ENCODE measurements at regions of chr1 and their contacts with region 1.

Region 1: GRCh38 chr1:20151906-20152598 is 12.9 kb downstream of the PLA2G2F start:
- DNase-seq: peak; percentile 67 to 73 (median 70)
- H3K4me3 ChIP-seq: peak overlapping the region; percentile 49 to 56
- H3K4me3 Mint-ChIP-seq: peak overlapping the region; percentile 69 to 92 (median 84)
- H3K27ac ChIP-seq: no peak overlapping the region
- H3K27ac Mint-ChIP-seq: peak overlapping the region in 1 of 7 donors; percentile 24
- H3K4me1 ChIP-seq: peaks cover 17% of the 10 kb centered on the region
- H3K4me1 Mint-ChIP-seq: peaks cover 11 to 18% (median 14%) of the 10 kb centered on the region in 4 donors
- H3K27me3 ChIP-seq: no peaks in the 10 kb centered on the region
- H3K27me3 Mint-ChIP-seq: no peaks in the 10 kb centered on the region

Region 2: GRCh38 chr1:19918057-19918456 is 234.0 kb before region 1 on chr1:
- CTCF ChIA-PET with region 1: interaction called, 102 read pairs
- POLR2A ChIA-PET with region 1: no interaction called
- intact Hi-C with region 1: loop called (anchors 1 kb)
- DNase-seq: peak; percentile 65 to 75 (median 71)
- H3K4me3 ChIP-seq: no peak overlapping the region
- H3K4me3 Mint-ChIP-seq: peak overlapping the region in 1 of 8 donors; percentile 68
- H3K27ac ChIP-seq: no peak overlapping the region
- H3K27ac Mint-ChIP-seq: peak overlapping the region in 1 of 7 donors; percentile 44
- H3K4me1 ChIP-seq: no peaks in the 10 kb centered on the region
- H3K4me1 Mint-ChIP-seq: peaks cover 4 to 6% (median 5%) of the 10 kb centered on the region in 4 donors
- H3K27me3 ChIP-seq: no peaks in the 10 kb centered on the region
- H3K27me3 Mint-ChIP-seq: peaks cover 0 to 1% of the 10 kb centered on the region in 2 donors

Region 3: GRCh38 chr1:20165522-20165951 is 13.5 kb after region 1 on chr1:
- CTCF ChIA-PET with region 1: interaction called, 22 read pairs
- POLR2A ChIA-PET with region 1: no interaction called
- intact Hi-C with region 1: no loop called
- DNase-seq: no peak
- H3K4me3 ChIP-seq: no peak overlapping the region
- H3K4me3 Mint-ChIP-seq: no peak overlapping the region
- H3K27ac ChIP-seq: no peak overlapping the region
- H3K27ac Mint-ChIP-seq: no peak overlapping the region
- H3K4me1 ChIP-seq: no peaks in the 10 kb centered on the region
- H3K4me1 Mint-ChIP-seq: peaks cover 0 to 1% (median 0%) of the 10 kb centered on the region in 4 donors
- H3K27me3 ChIP-seq: no peaks in the 10 kb centered on the region
- H3K27me3 Mint-ChIP-seq: peaks cover 3 to 5% of the 10 kb centered on the region in 2 donors

Region 4: GRCh38 chr1:20178634-20179370 is 26.8 kb after region 1 on chr1:
- CTCF ChIA-PET with region 1: interaction called, 15 read pairs
- POLR2A ChIA-PET with region 1: no interaction called
- intact Hi-C with region 1: no loop called
- DNase-seq: no peak
- H3K4me3 ChIP-seq: no peak overlapping the region
- H3K4me3 Mint-ChIP-seq: no peak overlapping the region
- H3K27ac ChIP-seq: no peak overlapping the region
- H3K27ac Mint-ChIP-seq: no peak overlapping the region
- H3K4me1 ChIP-seq: no peaks in the 10 kb centered on the region
- H3K4me1 Mint-ChIP-seq: peaks cover 6 to 13% (median 8%) of the 10 kb centered on the region in 4 donors
- H3K27me3 ChIP-seq: no peaks in the 10 kb centered on the region
- H3K27me3 Mint-ChIP-seq: no peaks in the 10 kb centered on the region